ENCODE measurements at regions of chr1 and their contacts with region 1.

Region 1: DNA sequence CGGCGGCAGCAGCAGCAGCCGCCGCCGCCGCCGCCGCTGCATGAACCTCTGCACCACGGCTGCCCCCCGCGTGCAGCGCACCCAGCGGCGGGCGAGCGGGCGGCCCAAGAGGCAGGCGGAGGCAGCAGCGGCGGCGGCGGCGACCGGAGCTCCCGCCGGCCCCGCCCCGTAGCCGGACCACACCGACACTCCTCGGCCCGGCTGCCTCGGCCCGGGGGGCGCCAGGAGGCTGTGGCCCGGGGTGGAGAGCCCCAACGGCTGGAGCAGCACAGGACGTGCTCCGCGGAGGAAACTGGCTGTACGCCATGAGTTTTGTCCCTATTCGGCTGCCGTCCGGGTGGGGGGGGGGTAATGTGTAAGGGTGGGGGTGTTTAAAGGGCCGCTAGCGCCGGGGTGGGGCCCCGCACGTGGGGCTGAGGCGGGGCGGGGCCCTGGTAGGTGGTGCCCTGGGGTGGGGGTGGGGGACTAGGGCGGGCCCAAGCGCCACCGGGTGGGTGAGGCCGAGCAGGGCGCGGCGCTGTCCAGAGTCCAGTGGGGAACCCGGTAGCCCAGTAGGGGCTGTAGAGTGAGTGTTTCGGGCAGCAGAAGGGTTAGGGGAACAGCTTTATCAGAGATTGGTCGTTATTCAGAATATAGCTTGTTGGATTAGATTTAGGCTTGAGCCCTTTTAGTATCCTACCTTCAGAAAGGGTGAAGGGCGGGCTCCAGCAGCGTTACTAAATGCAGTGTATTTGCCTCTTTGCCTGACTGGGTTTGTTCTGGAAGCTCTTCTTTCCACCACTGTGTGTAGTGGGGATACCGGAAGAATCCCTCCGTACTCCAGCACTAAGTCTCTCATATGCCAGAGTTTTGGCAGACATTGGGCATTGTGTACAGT is at the start of gene FAM78B:
- DNase-seq: peak; percentile 66
- H3K4me3 ChIP-seq: peak within 1 kb of the TSS; percentile 53
- H3K4me3 Mint-ChIP-seq: peak within 1 kb of the TSS; percentile 73
- H3K27ac Mint-ChIP-seq: no peak within 1 kb of the TSS
- H3K4me1 ChIP-seq: no peaks in the 10 kb centered on the region; the same call in 1 of the 2 replicates
- H3K4me1 Mint-ChIP-seq: no peaks in the 10 kb centered on the region
- H3K27me3 ChIP-seq: no peaks in the 10 kb centered on the region
- H3K27me3 Mint-ChIP-seq: peaks cover 30% of the 10 kb centered on the region
- CTCF ChIP-seq: no peak
- total RNA-seq, gene FAM78B: 0.21 TPM in 1 of 2 replicates, not detected in the other

Region 2: DNA sequence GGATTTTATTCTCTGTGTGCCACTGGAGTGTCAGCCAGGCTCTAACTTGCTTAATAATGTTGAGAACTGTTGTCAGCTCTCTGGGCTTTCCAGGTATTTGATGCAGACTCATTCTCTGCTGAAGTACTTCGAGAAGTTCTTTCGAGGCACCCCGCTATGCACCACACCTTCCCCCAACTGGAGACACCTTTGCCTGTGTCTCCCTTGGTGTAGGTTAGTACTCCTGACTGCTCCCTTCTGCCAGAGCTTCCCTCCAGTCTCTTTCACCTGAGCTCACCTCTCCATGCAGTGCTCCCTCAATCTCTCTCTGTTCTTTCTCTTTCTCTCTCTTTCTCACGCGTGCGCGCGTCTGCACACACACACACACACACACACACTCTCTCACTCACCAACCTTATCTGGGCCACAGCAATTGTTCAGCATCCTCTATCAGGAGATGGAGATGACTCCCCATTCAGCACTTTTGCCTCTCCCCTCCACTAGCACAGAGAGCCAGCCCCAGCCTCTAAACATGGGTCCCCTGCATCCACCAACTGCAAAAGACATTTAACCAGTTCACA is 549.9 kb before region 1 on chr1:
- CTCF ChIA-PET with region 1: no interaction called
- POLR2A ChIA-PET with region 1: no interaction called
- intact Hi-C with region 1: no loop called
- DNase-seq: no peak
- H3K4me3 ChIP-seq: no peak overlapping the region
- H3K4me3 Mint-ChIP-seq: no peak overlapping the region
- H3K27ac Mint-ChIP-seq: no peak overlapping the region
- H3K4me1 ChIP-seq: no peaks in the 10 kb centered on the region
- H3K4me1 Mint-ChIP-seq: no peaks in the 10 kb centered on the region
- H3K27me3 ChIP-seq: no peaks in the 10 kb centered on the region
- H3K27me3 Mint-ChIP-seq: peaks cover 15% of the 10 kb centered on the region
- CTCF ChIP-seq: no peak

Region 3: GRCh38 chr1:166017395-166017794 is 149.5 kb before region 1 on chr1:
- CTCF ChIA-PET with region 1: interaction called, 13 read pairs
- POLR2A ChIA-PET with region 1: no interaction called
- intact Hi-C with region 1: no loop called
- DNase-seq: no peak
- H3K4me3 ChIP-seq: no peak overlapping the region
- H3K4me3 Mint-ChIP-seq: no peak overlapping the region
- H3K27ac Mint-ChIP-seq: no peak overlapping the region
- H3K4me1 ChIP-seq: no peaks in the 10 kb centered on the region
- H3K4me1 Mint-ChIP-seq: no peaks in the 10 kb centered on the region
- H3K27me3 ChIP-seq: no peaks in the 10 kb centered on the region
- H3K27me3 Mint-ChIP-seq: peaks cover 16% of the 10 kb centered on the region
- CTCF ChIP-seq: peak in 1 of 2 experiments; percentile 7

Region 4: DNA sequence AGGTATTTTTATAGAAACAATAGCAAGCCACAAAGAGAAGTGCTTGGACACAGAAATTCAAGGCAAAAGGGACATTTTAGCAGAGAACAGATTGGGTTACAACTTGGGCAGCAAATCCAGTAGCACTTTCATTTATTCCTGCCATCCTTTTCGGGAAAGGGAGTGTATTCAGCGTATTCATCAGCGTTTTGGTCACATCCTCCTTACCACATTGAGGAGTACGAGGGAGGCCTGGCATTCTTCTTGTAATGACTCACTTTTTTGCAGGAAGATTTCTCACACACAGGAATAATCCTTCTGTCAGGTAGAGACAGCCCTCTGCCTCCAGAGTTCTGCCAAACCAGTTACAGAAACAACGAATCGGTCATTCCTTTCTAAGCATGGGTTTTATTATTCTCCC is 18.0 kb after region 1 on chr1:
- CTCF ChIA-PET with region 1: no interaction called
- POLR2A ChIA-PET with region 1: no interaction called
- intact Hi-C with region 1: no loop called
- DNase-seq: no peak
- H3K4me3 ChIP-seq: no peak overlapping the region
- H3K4me3 Mint-ChIP-seq: no peak overlapping the region
- H3K27ac Mint-ChIP-seq: no peak overlapping the region
- H3K4me1 ChIP-seq: no peaks in the 10 kb centered on the region
- H3K4me1 Mint-ChIP-seq: no peaks in the 10 kb centered on the region
- H3K27me3 ChIP-seq: no peaks in the 10 kb centered on the region; the same call in 1 of the 2 replicates
- H3K27me3 Mint-ChIP-seq: peaks cover 17% of the 10 kb centered on the region
- CTCF ChIP-seq: no peak

Measured in Caco-2 (cell line).